ENCODE measurements at regions of chr2 and their contacts with region 1.

Region 1: DNA sequence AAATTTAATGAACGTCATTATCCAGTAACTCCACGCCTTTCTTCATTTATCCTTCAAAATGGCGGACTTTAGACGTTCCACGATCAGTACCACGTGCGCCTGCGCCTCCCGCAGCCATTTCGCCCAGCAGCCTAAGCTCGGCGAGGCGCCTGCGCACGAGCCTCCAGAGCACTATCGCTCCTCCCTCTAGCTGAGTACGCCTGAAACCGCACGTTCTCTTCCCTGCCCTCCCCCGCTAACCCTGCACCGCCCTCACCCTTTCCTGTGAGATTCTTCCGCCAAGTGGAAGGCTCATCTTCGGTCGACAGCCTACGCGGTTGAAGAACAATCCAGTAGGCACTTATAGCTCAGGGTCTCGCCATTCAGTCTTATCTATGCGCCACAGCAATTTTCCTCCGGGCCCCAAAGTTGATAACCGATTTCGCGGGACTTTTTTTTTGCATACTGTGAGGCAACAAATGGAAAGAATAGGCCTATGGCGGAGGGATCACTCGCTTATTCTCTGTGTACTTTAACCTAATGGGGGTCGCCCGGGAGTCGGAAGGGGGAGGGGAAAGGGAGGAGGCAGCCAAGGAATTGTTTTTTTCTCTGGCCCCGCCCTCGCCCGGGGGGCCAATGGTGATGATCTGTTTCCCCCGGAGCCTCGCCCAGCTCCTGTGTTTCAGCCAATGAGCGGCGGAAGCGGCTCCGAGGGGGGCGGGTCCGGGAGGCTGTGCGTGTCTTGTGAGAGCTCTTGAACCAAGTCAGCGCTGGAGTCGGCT is at the start of gene KDM3A:
- DNase-seq: peak; percentile 98
- ATAC-seq: peak; percentile 84
- H3K4me3 Mint-ChIP-seq: peak within 1 kb of the TSS; percentile 94
- H3K27ac Mint-ChIP-seq: peak within 1 kb of the TSS; percentile 97
- H3K4me1 Mint-ChIP-seq: peaks cover 36% of the 10 kb centered on the region
- H3K27me3 Mint-ChIP-seq: no peaks in the 10 kb centered on the region
- total RNA-seq, gene KDM3A: 94.7 to 106 TPM

Region 2: GRCh38 chr2:86225581-86225980 is 215.2 kb before region 1 on chr2:
- POLR2A ChIA-PET with region 1: interaction called, 14 read pairs
- DNase-seq: peak; percentile 70
- ATAC-seq: peak; percentile 92
- H3K4me3 Mint-ChIP-seq: peak overlapping the region; percentile 58
- H3K27ac Mint-ChIP-seq: peak overlapping the region; percentile 94
- H3K4me1 Mint-ChIP-seq: peaks cover 17% of the 10 kb centered on the region
- H3K27me3 Mint-ChIP-seq: peaks cover 4% of the 10 kb centered on the region

Region 3: DNA sequence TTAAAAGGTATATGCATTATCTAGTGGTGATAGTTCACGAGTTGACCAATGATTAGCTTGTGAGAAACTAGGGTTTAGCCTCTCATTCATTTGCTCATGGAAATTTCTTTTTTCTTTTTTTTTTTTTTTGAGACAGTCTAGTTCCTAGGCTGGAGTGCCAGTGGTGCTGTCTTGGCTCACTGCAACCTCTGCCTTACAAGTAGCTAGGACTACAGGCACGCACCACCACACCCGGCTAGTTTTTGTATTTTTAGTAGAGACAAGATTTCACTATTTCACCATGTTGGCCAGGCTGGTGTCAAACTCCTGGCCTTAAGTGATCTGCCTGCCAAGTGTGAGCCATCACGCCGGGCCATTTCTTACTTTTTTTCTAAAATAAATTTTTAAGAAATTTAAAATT is 14.4 kb after region 1 on chr2:
- POLR2A ChIA-PET with region 1: interaction called, 14 read pairs
- DNase-seq: no peak
- ATAC-seq: no peak
- H3K4me3 Mint-ChIP-seq: no peak overlapping the region
- H3K27ac Mint-ChIP-seq: no peak overlapping the region
- H3K4me1 Mint-ChIP-seq: peaks cover 3% of the 10 kb centered on the region
- H3K27me3 Mint-ChIP-seq: no peaks in the 10 kb centered on the region

Region 4: GRCh38 chr2:86498468-86499250 is 57.8 kb after region 1 on chr2:
- POLR2A ChIA-PET with region 1: no interaction called
- DNase-seq: no peak
- ATAC-seq: no peak
- H3K4me3 Mint-ChIP-seq: no peak overlapping the region
- H3K27ac Mint-ChIP-seq: no peak overlapping the region
- H3K4me1 Mint-ChIP-seq: peaks cover 2% of the 10 kb centered on the region
- H3K27me3 Mint-ChIP-seq: no peaks in the 10 kb centered on the region

Region 5: GRCh38 chr2:86562922-86563649 is 122.3 kb after region 1 on chr2 and contains the start of gene CHMP3:
- POLR2A ChIA-PET with region 1: interaction called, 15 read pairs
- DNase-seq: peak; percentile 96
- ATAC-seq: peak; percentile 94
- H3K4me3 Mint-ChIP-seq: peak within 1 kb of the TSS; percentile 95
- H3K27ac Mint-ChIP-seq: peak within 1 kb of the TSS; percentile 99
- H3K4me1 Mint-ChIP-seq: peaks cover 22% of the 10 kb centered on the region
- H3K27me3 Mint-ChIP-seq: no peaks in the 10 kb centered on the region
- total RNA-seq, gene CHMP3: 48.9 to 49.5 TPM

Region 6: GRCh38 chr2:86783615-86784339 is 343.0 kb after region 1 on chr2:
- POLR2A ChIA-PET with region 1: interaction called, 12 read pairs
- DNase-seq: no peak
- ATAC-seq: no peak
- H3K4me3 Mint-ChIP-seq: peak overlapping the region; percentile 93
- H3K27ac Mint-ChIP-seq: peak overlapping the region; percentile 99
- H3K4me1 Mint-ChIP-seq: peaks cover 58% of the 10 kb centered on the region
- H3K27me3 Mint-ChIP-seq: no peaks in the 10 kb centered on the region

Measured in activated naive CD8-positive, alpha-beta T cell treated with anti-CD3 and anti-CD28 coated beads, Interleukin-2, amount 10 ng/mL, durations not matched to agents 7 days and 5 days (primary cell).